Common myeloid progenitor, CD34-positive (primary cell): ENCODE measurements at regions of chr12 and their contacts with region 1.

Region 1: DNA sequence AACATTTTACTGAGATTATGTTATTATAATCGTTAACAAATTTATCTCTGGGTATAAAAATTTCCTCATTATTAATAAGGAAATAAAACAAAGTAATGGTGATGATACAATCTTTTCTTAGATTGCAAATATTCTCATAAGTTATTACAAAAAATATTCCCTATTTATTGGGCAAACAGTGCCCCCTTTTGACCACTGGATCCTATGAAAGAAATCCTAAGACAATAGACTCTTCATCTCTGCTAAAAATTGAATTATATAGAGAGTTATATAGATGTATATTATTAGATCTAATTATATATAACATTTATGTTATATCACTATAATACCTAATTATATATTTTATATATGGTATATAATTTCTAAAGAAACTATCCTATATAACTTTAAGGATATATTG is 94.2 kb upstream of the FGD4 start:
- DNase-seq: peak in 2 of 3 donors; percentile 63 to 64
- H3K4me3 ChIP-seq: no peak overlapping the region
- H3K27ac ChIP-seq: no peak overlapping the region
- H3K4me1 ChIP-seq: no peaks in the 10 kb centered on the region
- H3K27me3 ChIP-seq: no peaks in the 10 kb centered on the region

Region 2: GRCh38 chr12:31682136-31682962 is 622.8 kb before region 1 on chr12:
- CTCF ChIA-PET with region 1: interaction called, 11 read pairs
- POLR2A ChIA-PET with region 1: no interaction called
- DNase-seq: peak; percentile 88 to 94 (median 91)
- H3K4me3 ChIP-seq: no peak overlapping the region
- H3K27ac ChIP-seq: no peak overlapping the region
- H3K4me1 ChIP-seq: peaks cover 0 to 11% (median 6%) of the 10 kb centered on the region in 4 experiments
- H3K27me3 ChIP-seq: no peaks in the 10 kb centered on the region

Region 3: DNA sequence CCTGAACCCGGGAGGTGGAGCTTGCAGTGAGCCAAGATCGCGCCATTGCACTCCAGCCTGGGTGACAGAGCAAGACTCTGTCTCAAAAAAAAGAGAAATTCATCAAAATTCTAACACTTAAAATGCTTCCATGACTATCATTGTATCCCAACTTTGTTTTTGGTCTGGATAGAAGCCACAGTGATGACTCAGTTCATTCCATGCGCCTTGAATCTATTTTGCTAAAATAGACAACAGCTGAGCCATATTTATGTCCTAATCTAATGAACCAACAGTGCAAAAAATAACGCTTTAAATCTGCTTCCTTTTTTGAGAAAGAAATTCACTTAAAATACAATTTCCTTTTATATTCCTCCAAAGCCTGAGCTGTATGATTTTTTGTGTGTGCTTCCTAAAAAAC is 221.7 kb before region 1 on chr12:
- CTCF ChIA-PET with region 1: no interaction called
- POLR2A ChIA-PET with region 1: no interaction called
- DNase-seq: no peak
- H3K4me3 ChIP-seq: no peak overlapping the region
- H3K27ac ChIP-seq: no peak overlapping the region
- H3K4me1 ChIP-seq: no peaks in the 10 kb centered on the region
- H3K27me3 ChIP-seq: no peaks in the 10 kb centered on the region

Region 4: GRCh38 chr12:32261638-32262037 is 43.5 kb before region 1 on chr12:
- CTCF ChIA-PET with region 1: interaction called, 12 read pairs
- POLR2A ChIA-PET with region 1: no interaction called
- DNase-seq: peak; percentile 58 to 85 (median 68)
- H3K4me3 ChIP-seq: no peak overlapping the region
- H3K27ac ChIP-seq: no peak overlapping the region
- H3K4me1 ChIP-seq: peaks cover 10 to 36% (median 25%) of the 10 kb centered on the region in 4 experiments
- H3K27me3 ChIP-seq: no peaks in the 10 kb centered on the region